ENCODE measurements at regions of chr12 and their contacts with region 1.

Region 1: DNA sequence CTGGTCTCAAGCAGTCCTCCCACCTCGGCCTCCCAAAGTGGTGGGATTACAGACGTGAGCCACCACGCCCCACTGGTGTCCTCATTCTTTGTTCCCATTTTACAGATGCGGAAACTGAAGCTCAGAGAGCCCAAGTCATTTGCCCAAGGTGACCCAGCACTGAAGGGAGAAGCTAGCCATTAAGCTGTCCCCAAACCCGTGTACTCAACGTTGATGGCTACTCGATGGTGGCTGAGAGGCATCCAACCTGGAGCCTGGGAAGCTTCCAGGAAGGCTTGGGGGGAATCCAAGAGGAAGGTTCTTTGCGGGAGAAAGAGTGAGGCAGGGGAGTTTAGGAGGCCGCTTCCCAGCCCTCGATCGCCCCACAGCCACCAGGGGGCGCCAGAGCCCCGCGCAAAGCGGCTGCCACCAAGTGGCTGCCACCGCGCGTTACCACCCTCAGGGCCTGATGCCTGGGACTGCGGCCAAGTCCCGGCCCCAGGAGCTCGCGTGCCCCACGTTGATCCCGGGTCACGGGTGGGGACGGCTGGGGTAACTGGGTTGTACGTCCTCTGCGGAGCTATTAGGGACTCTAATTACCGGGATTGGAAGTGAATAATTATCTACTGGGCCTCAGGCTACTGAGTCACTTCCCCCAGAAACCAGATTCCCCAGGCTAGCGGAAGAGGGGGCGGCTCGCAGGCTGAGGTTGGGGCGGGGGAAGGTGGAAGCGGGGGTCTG is 8.8 kb upstream of the SH2B3 start:
- H3K4me3 ChIP-seq: peak overlapping the region; percentile 21
- H3K27ac ChIP-seq: no peak overlapping the region
- H3K4me1 ChIP-seq: no peaks in the 10 kb centered on the region
- CTCF ChIP-seq: peak; percentile 99

Region 2: DNA sequence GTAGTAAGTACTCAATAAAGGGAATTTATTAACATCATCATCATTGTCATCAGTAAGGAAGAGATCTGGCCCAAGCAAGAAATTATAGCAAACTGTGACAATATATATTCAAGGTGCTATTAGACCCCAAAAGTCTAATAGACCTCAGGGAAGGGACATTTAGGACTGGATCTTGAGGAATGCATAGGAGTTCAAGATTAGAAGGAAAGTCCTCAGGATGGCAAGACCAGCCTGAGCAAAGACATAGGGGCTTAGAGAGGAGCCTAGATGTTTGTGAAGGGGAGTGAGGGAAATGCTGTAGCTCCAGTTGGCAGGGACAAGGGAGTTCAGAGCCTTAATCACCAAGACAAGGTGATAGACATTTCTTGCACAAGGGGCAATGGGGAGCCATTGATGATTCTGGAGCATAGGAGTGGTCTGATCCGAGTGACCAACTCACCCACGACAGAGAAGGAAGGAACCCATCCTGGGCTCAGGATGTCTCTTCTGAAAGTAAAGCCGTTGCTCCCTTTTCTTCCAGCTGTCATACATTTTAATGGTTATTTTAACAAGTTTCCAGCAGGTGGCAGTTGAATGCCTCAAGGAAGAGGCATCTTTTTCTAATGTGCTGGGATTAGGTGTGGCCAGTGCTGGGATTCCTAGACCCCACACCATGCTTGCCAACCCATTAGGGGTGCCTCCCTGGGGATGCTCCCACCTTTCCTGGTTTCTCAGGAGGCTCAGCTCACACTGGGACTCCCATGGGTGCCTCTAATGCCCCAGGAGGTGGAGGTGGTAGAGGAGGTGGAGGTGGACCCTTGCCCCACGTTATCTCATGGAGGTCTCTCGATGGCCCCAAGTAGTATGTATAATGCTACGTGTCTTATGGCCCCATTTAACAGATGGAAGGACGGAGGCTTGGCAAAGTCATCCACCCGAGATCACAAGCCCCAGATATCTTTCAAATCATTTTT is 65.8 kb before region 1 on chr12:
- CTCF ChIA-PET with region 1: interaction called, 17 read pairs
- POLR2A ChIA-PET with region 1: no interaction called
- H3K4me3 ChIP-seq: no peak overlapping the region
- H3K27ac ChIP-seq: no peak overlapping the region
- H3K4me1 ChIP-seq: no peaks in the 10 kb centered on the region
- CTCF ChIP-seq: peak; percentile 52

Region 3: DNA sequence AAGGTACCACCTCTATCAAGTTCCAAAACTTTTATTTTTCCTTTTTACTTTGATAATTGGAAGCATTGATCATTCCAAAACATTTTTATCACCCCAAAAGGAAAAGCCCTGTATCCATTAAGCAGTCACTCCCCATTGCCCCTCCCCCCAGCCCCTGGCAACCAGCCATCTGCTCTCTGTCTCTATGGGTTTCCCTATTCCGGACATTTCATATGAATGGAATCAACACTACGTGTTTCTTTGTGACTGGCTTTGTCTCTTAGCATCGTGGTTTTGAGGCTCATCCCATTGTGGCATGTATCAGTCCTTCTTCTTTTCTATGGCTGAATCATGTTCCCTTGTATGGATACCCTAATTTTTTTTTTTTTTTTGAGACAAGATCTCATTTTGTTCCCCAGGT is 10.0 kb before region 1 on chr12:
- CTCF ChIA-PET with region 1: interaction called, 27 read pairs
- POLR2A ChIA-PET with region 1: no interaction called
- H3K4me3 ChIP-seq: no peak overlapping the region
- H3K27ac ChIP-seq: no peak overlapping the region
- H3K4me1 ChIP-seq: no peaks in the 10 kb centered on the region
- CTCF ChIP-seq: no peak

Region 4: GRCh38 chr12:111451649-111452129 is 54.8 kb after region 1 on chr12:
- CTCF ChIA-PET with region 1: interaction called, 217 read pairs
- POLR2A ChIA-PET with region 1: interaction called, 6 read pairs
- H3K4me3 ChIP-seq: no peak overlapping the region
- H3K27ac ChIP-seq: no peak overlapping the region
- H3K4me1 ChIP-seq: no peaks in the 10 kb centered on the region
- CTCF ChIP-seq: peak; percentile 50; the same call in 1 of the 2 replicates

Region 5: GRCh38 chr12:111482462-111482861 is 85.6 kb after region 1 on chr12:
- CTCF ChIA-PET with region 1: interaction called, 12 read pairs
- POLR2A ChIA-PET with region 1: no interaction called
- H3K4me3 ChIP-seq: no peak overlapping the region
- H3K27ac ChIP-seq: no peak overlapping the region
- H3K4me1 ChIP-seq: no peaks in the 10 kb centered on the region
- CTCF ChIP-seq: no peak

Region 6: DNA sequence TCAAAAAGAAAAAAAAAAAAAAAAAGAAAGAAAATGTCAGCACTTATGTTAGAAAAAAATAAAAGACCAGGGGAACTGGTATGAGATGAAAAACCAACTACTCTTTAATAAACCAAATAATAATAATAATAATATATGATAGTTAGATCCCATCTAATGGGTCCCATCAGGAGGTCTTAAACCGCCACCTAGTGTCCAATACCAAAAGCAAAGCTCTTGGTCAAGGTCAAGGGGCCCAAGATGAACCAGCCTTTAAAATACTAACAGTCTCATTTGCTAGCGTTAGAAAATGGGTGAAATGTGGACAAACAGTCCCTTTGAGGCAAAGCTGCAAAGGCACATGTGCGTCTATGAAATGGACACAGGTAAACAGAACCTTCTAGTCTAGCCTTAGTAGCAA is 276.6 kb after region 1 on chr12:
- CTCF ChIA-PET with region 1: interaction called, 24 read pairs
- POLR2A ChIA-PET with region 1: no interaction called
- H3K4me3 ChIP-seq: no peak overlapping the region
- H3K27ac ChIP-seq: no peak overlapping the region
- H3K4me1 ChIP-seq: no peaks in the 10 kb centered on the region
- CTCF ChIP-seq: no peak

Measured in HEK293 (cell line).